Activated T-helper 1 cell treated with anti-CD3 and anti-CD28 coated beads, Interleukin-12 subunit alpha, Interleukin-12 subunit beta, Interleukin-2, Interleukin-4 antibody, amounts not matched to agents 30 ng/mL and 10 ng/mL and 1 ng/mL, durations not matched to agents 14 hours and 24 hours and 36 hours (primary cell): ENCODE measurements at regions of chr7 and their contacts with region 1.

Region 1: GRCh38 chr7:151008511-151009323 is 15.6 kb downstream of the ATG9B start:
- DNase-seq: peak; percentile 71
- H3K4me3 Mint-ChIP-seq: peak overlapping the region; percentile 81
- H3K27ac Mint-ChIP-seq: peak overlapping the region; percentile 71
- H3K4me1 Mint-ChIP-seq: peaks cover 44% of the 10 kb centered on the region
- H3K27me3 Mint-ChIP-seq: no peaks in the 10 kb centered on the region

Region 2: GRCh38 chr7:150668472-150668911 is 340.2 kb before region 1 on chr7:
- intact Hi-C with region 1: no loop called
- DNase-seq: peak; percentile 74
- H3K4me3 Mint-ChIP-seq: peak overlapping the region; percentile 74
- H3K27ac Mint-ChIP-seq: peak overlapping the region; percentile 91
- H3K4me1 Mint-ChIP-seq: peaks cover 94% of the 10 kb centered on the region
- H3K27me3 Mint-ChIP-seq: no peaks in the 10 kb centered on the region

Region 3: GRCh38 chr7:150823484-150824126 is 185.1 kb before region 1 on chr7:
- intact Hi-C with region 1: no loop called
- DNase-seq: no peak
- H3K4me3 Mint-ChIP-seq: no peak overlapping the region
- H3K27ac Mint-ChIP-seq: no peak overlapping the region
- H3K4me1 Mint-ChIP-seq: no peaks in the 10 kb centered on the region
- H3K27me3 Mint-ChIP-seq: peaks cover 30% of the 10 kb centered on the region

Region 4: DNA sequence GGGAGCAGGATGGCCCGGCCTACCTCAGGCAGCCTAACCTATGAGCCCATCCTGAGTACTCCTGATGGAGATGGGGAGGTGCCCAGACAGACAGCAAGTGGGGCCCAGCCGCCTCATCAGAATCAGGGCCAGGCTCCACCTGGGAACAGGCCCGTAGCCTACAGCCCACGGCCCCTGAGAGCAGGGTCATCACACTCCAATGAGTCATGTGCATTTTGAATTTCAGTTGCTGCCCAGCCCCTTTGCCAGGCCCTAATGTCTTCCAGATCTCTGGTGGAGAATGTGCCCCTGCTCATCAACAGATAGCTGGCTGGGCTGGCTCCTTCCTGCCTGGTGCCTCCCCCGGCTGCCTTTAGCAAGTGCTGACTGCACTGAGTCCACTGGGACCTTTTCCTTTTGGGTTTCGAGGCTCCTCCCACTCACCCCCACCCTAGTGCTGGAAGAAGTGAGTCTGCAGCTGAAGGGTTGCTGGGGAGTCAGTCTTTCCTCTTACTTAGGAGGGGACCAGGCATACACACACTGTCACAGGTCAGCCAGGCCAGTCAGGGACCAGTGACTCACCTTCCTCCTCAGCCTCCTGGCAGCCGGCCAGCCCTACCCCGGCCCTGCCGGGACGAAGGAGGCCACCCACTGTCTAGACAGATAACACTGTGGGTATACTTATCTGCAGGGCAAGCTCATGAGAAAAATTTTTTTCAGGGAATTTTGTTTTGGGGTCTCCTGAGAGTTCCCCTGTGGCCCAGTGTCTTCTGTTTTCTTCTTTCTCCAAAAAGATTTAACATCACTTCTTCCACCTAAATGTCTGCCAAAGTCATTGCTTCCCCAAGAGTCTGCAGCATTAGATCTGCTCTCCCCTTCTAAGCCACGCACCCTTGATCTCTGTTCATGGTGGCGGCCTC is 30.5 kb after region 1 on chr7:
- intact Hi-C with region 1: loop called (anchors 1 kb)
- DNase-seq: no peak
- H3K4me3 Mint-ChIP-seq: peak overlapping the region; percentile 19
- H3K27ac Mint-ChIP-seq: peak overlapping the region; percentile 96
- H3K4me1 Mint-ChIP-seq: peaks cover 18% of the 10 kb centered on the region
- H3K27me3 Mint-ChIP-seq: no peaks in the 10 kb centered on the region

Region 5: DNA sequence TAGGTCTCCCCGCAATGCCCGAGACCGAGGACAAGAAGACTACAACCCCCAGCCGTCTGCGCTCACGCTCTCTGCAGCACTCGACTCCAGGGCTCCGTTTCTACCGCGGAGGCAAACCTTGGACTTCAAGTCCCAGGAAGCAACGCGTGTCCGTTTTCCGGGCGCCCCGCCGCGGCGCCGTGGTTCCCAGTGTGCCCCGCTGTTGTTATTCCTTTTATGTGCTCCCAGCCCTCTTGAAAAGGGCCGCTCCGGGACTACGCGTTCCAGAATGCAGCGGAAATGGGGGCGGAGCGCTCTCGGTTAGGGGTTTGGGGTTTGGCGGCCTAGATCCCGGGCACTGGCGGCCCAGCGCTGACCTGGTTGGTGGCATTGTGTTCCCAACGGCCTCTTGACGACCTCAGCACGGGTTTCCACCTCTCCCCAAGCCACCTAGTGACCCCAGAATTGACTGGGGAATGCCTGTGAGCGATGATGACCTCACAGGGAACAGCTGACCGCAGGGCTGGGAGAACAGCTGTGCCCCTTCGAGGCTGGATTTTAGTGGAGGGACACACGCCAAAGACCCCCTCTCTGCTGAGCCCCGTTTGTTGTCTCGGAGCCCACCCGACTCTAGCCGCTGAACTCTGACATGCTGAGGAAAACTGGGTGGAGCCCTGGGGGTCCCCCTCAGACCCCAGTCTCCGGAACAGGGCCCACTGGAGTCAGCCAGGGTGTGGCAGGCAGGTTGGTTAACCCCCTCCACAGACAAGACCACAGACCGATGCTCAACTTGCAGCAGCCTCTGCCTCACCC is 49.5 kb after region 1 on chr7:
- intact Hi-C with region 1: loop called (anchors 1 kb)
- DNase-seq: peak; percentile 95
- H3K4me3 Mint-ChIP-seq: peak overlapping the region; percentile 93
- H3K27ac Mint-ChIP-seq: peak overlapping the region; percentile 92
- H3K4me1 Mint-ChIP-seq: peaks cover 46% of the 10 kb centered on the region
- H3K27me3 Mint-ChIP-seq: no peaks in the 10 kb centered on the region